Naive thymus-derived CD8-positive, alpha-beta T cell (primary cell): ENCODE measurements at regions of chr11 and their contacts with region 1.

Region 1: DNA sequence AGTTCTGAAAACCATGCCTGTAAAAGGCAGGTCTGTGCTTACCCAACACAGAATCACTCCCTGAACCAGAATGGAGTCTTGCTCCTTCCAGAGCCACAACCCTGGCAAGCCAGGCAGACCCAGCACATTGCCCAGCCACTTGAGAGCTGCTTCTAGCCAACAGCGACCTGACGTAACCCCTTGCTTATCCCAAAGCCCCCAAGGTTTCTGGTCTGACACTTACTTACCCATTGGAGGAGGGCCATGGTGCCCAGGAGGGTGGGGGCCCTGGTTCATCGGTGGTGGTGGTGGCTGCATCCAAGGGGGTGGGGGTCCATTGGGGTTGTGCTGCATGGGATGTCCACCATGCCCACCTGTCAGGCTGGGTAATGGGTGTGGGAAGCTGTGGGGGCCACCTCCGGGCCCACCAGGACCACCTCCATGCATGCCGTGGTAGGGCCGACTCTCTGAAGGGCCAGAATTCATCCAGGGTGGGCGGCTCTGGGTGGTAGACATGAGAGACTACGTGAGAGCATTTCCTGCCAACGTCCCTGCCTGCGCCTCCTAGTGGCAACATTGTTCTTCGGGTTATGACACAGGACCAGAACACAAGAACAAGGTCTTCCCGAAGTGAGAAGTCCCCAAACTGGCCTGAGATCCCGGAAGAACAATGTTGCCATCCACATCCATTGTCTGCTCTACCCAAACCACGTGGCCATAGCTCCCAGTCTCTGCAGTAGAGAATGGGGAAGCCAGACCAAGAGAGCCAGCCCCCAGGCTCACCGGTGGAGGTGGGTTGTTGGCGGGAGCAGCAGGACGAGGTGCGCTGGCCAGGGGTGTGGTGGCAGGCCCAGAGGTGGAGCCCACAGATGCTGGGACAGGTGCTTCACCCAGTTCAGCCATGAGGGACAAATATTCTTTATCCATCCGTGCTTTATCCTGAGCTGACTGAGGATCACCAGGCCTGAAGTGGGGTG is 7.8 kb upstream of the PYGM start:
- DNase-seq: peak; percentile 66 to 93 (median 82)
- ATAC-seq: peak; percentile 15 to 30
- H3K4me3 Mint-ChIP-seq: peak overlapping the region; percentile 53 to 88 (median 78)
- H3K27ac Mint-ChIP-seq: peak overlapping the region; percentile 83 to 99 (median 94)
- H3K4me1 Mint-ChIP-seq: peaks cover 49 to 98% (median 93%) of the 10 kb centered on the region in 4 donors
- H3K27me3 Mint-ChIP-seq: no peaks in the 10 kb centered on the region

Region 2: GRCh38 chr11:64810271-64810890 is 42.8 kb after region 1 on chr11 and contains the start of gene MEN1:
- POLR2A ChIA-PET with region 1: interaction called, 15 read pairs
- DNase-seq: peak; percentile 59 to 88 (median 76)
- ATAC-seq: peak; percentile 90 to 92
- H3K4me3 Mint-ChIP-seq: peak within 1 kb of the TSS; percentile 91 to 99 (median 94)
- H3K27ac Mint-ChIP-seq: peak within 1 kb of the TSS; percentile 90 to 98 (median 96)
- H3K4me1 Mint-ChIP-seq: peaks cover 22 to 35% (median 29%) of the 10 kb centered on the region in 4 donors
- H3K27me3 Mint-ChIP-seq: no peaks in the 10 kb centered on the region
- polyA plus RNA-seq, gene MEN1: 22.1 to 57.4 (median 36.1) TPM

Region 3: DNA sequence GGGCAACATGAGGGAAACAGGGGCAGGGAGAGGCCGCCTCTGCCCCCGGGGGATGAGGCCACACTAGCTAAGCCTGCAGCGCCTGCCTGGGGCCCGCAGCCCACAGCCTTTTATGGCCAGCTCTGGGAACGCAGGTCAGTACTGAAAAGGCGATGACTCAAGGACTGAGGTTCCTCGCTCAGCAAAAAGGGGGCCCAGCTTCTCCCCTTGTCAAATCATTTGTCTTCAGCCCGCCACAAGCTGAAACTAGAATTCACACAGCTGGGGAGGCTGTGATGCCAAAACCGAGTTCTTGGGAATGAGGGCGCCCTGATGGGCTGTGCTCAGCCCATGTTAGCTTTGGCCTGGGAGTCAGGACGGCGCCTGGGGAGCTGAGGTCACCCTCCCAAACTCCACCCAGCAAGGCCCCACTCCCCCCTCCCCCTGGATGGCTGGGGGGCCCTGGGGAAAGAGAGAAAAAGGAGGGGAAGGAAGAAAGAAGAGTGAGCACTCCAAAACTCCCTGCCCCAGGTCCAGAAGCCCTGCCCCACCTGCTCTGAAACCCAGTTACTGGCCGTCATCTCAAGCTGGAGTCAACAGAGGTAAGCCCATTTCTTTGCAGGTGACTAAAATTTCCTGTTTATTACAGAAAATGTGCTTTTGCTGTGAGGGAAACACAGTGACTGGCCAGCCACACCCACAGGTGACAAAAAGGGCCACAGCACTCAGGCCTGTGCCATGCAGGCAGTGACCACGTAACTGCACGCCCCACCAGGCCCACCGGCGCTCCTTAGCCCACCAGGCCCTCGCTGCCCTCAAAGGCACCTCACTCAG is 97.1 kb after region 1 on chr11:
- POLR2A ChIA-PET with region 1: interaction called, 15 read pairs
- DNase-seq: peak in 1 of 10 donors; percentile 58
- ATAC-seq: peak in 1 of 2 donors; percentile 2
- H3K4me3 Mint-ChIP-seq: peak overlapping the region; percentile 66 to 85 (median 81)
- H3K27ac Mint-ChIP-seq: peak overlapping the region; percentile 72 to 99 (median 95)
- H3K4me1 Mint-ChIP-seq: peaks cover 42 to 97% (median 91%) of the 10 kb centered on the region in 4 donors
- H3K27me3 Mint-ChIP-seq: no peaks in the 10 kb centered on the region